ENCODE measurements at regions of chr14 and their contacts with region 1.

Region 1: GRCh38 chr14:49892636-49893308 is at the start of gene ARF6:
- DNase-seq: peak; percentile 91
- H3K4me3 ChIP-seq: peak within 1 kb of the TSS; percentile 91 to 99 (median 98)
- H3K27ac ChIP-seq: peak within 1 kb of the TSS; percentile 99 to 100 (median 100)
- H3K4me1 ChIP-seq: peaks cover 16 to 45% (median 23%) of the 10 kb centered on the region in 3 donors
- H3K27me3 ChIP-seq: no peaks in the 10 kb centered on the region
- CTCF ChIP-seq: peak in 2 of 6 experiments; percentile 16 to 66
- POLR2A ChIP-seq: peak in 3 of 4 donors; percentile 97 to 99 (median 98)
- total RNA-seq, gene ARF6: 109 to 156 (median 133) TPM

Region 2: DNA sequence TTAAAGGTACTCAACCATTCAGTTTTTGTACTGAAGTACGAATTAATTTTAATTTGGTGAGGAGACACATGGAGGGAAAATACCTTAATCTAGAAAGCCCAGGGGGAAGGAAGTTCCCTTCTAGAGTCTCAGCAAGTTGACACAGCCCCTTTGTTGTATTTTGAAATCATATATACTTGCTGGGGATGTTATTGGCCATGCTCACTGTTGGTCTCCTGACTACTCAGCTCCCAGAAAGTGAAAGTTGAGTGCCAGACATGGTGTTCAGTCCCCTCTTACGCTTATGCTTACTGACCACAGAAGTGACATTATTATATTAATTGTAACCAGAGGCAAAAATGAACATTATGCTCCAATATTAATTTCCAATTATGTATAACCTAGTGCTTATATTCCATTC is 28.2 kb after region 1 on chr14:
- intact Hi-C with region 1: no loop called
- DNase-seq: no peak
- H3K4me3 ChIP-seq: no peak overlapping the region
- H3K27ac ChIP-seq: no peak overlapping the region
- H3K4me1 ChIP-seq: no peaks in the 10 kb centered on the region
- H3K27me3 ChIP-seq: no peaks in the 10 kb centered on the region
- CTCF ChIP-seq: no peak
- POLR2A ChIP-seq: no peak

Region 3: DNA sequence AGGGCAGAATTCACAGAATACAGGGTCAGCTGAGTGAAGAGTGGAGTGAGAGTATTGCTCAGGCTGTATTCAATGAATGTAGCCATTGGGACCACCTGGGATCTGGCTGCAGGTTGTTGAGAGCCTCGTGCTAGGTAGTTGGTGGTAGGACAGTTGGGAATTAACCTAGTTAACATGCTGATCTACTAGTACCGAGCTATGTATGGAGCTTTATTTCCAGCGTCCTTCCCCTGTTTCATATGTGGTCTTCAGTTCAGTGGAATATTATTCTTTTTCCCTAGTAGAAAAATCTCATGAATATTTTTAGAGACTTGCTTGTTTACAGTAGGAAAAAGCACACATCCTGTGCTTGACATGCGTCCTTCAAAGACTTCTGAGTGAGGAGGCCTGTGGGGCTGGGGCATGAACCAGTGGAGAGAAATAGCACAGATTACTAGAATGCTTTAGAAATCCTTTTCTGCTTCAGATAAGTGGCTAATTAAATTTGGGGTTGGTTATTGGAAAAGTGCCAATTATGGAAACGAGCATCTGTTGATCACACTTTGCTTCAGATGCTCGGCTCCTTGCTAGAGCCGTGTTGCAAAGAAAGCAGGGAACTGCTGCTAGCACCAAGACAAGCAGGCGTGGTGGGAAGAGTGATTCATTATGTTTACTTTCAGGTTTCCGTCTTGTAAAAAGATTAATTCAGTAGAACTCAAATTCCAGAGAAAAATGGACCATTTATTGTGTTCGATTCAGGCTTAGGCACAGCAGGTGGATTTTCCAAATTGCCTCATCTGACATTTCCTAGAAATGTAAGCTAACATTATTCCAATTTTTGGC is 53.8 kb after region 1 on chr14:
- intact Hi-C with region 1: no loop called
- DNase-seq: no peak
- H3K4me3 ChIP-seq: no peak overlapping the region
- H3K27ac ChIP-seq: peak overlapping the region; percentile 42 to 92 (median 80)
- H3K4me1 ChIP-seq: peaks cover 18 to 74% (median 20%) of the 10 kb centered on the region in 3 donors
- H3K27me3 ChIP-seq: no peaks in the 10 kb centered on the region
- CTCF ChIP-seq: no peak
- POLR2A ChIP-seq: no peak

Region 4: DNA sequence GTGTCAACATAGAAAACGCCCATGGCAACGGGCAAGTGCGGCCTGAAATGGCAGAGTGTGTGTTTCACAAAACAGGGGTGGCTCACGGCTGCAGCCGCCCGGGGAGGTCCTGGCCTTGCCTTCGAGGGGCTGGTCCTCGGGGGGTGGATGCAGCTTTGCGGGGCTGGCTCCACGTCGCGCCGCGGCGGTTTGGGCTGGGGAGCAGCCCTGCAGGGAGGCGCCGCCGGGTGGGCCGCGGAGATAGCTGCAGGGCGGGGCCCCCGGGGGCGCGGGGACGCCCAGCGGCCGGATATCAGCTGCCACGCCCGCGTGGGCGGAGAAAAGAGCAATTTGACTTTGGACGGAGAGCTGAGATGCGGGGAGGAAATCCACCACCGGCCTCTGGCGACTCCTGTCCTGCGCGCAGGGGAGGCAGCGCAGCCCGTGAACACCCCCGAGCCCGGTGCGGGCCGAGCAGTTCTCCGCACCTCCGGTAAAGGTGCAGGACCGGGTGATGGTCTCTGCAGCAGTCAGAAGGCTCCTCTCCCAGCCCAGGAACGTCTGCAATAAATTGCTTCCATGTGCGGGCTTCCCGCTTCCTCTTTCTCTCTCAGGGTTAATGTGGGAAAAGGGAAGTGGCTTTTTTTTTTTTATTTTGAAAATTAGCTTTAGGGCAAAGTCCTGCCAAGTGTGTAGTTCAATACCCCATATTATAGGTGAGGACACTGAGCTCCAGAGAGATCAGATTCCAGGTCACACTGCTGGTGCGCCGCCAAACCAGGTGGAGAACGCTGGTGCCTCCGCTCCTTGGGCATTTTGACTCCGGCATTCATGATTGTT is 110.7 kb after region 1 on chr14:
- intact Hi-C with region 1: loop called (anchors 5 kb)
- DNase-seq: peak; percentile 43
- H3K4me3 ChIP-seq: peak overlapping the region; percentile 33 to 67 (median 56)
- H3K27ac ChIP-seq: peak overlapping the region; percentile 92 to 98 (median 96)
- H3K4me1 ChIP-seq: peaks cover 55 to 86% (median 57%) of the 10 kb centered on the region in 3 donors
- H3K27me3 ChIP-seq: no peaks in the 10 kb centered on the region
- CTCF ChIP-seq: peak in 5 of 6 experiments; percentile 16 to 47 (median 34)
- POLR2A ChIP-seq: peak in 2 of 4 donors; percentile 62 to 87

Measured in esophagus squamous epithelium (tissue), 5 donors.